Panc1 (cell line): ENCODE measurements at regions of chr10 and their contacts with region 1.

Region 1: DNA sequence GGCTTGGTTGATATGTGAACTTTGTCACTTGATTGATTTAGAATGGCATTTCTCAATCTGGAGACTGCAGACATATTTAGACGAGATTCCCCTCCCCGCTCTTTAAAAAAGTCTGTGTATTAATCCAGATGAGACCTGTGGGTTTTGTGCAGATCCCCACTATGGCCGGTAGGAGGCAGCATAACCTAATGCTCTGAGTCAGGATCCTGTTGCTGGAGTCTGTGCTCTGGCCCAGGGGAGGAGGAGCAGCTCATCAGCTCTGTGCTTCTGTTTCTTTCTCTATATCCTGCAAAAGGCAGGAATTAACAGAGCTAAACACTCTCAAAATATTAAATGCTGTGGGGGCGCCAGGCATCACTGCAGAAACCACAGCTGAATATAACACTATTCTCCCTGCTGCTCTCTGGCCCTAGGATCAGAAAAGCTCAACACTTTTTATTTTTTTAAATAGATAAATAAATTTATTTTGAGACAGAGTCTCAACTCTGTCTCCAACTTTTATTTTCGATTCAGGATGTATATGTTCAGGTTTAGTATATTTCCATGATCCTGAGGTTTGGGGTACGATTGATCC is 23.9 kb upstream of the SEPHS1 start:
- DNase-seq: peak; percentile 55
- ATAC-seq: peak; percentile 97
- H3K4me3 ChIP-seq: no peak overlapping the region
- H3K27ac ChIP-seq: no peak overlapping the region
- H3K4me1 ChIP-seq: no peaks in the 10 kb centered on the region
- H3K27me3 ChIP-seq: no peaks in the 10 kb centered on the region
- CTCF ChIP-seq: peak; percentile 90

Region 2: DNA sequence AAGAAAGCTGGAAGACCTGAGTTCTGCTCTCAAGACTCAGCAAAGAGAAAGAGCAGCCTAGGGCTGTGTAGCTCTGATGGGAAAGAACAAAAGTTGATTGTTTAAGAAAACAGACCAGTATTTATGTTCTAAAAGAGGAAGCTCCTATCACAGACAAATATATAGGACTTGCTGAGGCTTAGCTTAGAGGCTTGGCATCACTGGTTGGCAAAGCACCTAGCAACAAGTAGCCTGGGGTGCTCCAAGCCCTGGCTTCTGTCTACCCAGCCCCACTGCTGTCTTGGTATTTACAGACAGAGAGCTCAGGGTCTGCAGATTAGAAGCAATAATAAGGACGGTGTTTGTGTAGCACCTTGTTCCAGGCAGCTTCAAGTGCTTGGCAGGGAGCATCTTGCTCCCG is 333.6 kb before region 1 on chr10:
- CTCF ChIA-PET with region 1: no interaction called
- POLR2A ChIA-PET with region 1: no interaction called
- in situ Hi-C with region 1: no loop called
- intact Hi-C with region 1: no loop called
- DNase-seq: no peak
- ATAC-seq: peak; percentile 56; the same call in 1 of the 2 replicates
- H3K4me3 ChIP-seq: no peak overlapping the region
- H3K27ac ChIP-seq: no peak overlapping the region
- H3K4me1 ChIP-seq: no peaks in the 10 kb centered on the region
- H3K27me3 ChIP-seq: no peaks in the 10 kb centered on the region
- CTCF ChIP-seq: no peak

Region 3: DNA sequence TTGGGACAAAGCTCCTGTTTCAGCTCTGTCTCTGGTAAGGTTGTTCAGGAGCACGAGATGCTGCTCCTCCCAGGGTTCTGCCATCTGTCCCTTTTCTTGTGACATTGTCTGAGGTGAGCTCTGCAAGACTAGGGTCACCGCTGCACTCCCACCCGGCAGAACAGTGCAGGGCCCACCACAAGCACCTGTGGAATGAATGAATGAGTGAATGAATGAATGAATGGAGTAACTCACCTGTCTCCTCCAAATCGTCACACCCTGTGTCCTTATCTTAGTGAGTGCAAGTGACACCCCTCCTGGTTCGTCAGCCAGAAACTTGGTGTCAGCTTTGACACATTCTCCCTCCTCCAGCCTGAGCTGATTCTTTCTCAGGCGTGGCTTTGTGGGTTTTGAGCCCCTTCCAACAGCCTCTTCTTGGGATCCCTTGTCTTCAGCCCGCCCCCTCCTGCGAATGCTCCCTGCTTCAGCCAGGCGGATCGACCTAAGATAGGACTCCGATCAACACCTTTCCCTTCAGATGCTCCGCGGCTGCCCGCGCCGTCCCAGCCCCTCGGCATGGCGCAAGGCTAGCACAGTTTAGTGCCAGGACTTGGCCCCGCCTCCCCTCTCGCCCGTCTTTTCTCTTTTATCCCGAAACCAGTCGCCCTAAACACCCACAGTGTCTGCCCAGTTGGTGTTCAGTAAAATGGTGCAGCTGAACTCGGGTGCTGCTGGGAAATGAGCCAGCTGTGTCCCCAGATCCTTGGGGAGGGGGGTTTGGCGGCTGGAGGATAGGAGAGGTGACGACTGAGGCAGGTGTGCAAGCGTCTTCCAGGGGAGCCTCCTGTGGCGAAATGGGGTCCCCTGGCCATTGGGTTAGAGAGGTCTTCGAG is 67.6 kb after region 1 on chr10:
- CTCF ChIA-PET with region 1: interaction called, 8 read pairs
- POLR2A ChIA-PET with region 1: no interaction called
- in situ Hi-C with region 1: no loop called
- intact Hi-C with region 1: loop called (anchors 2 kb)
- DNase-seq: no peak
- ATAC-seq: peak; percentile 53; the same call in 1 of the 2 replicates
- H3K4me3 ChIP-seq: peak overlapping the region in 1 of 2 experiments; percentile 16; a peak in 1 of 4 replicates
- H3K27ac ChIP-seq: no peak overlapping the region
- H3K4me1 ChIP-seq: no peaks in the 10 kb centered on the region
- H3K27me3 ChIP-seq: no peaks in the 10 kb centered on the region
- CTCF ChIP-seq: no peak

Region 4: DNA sequence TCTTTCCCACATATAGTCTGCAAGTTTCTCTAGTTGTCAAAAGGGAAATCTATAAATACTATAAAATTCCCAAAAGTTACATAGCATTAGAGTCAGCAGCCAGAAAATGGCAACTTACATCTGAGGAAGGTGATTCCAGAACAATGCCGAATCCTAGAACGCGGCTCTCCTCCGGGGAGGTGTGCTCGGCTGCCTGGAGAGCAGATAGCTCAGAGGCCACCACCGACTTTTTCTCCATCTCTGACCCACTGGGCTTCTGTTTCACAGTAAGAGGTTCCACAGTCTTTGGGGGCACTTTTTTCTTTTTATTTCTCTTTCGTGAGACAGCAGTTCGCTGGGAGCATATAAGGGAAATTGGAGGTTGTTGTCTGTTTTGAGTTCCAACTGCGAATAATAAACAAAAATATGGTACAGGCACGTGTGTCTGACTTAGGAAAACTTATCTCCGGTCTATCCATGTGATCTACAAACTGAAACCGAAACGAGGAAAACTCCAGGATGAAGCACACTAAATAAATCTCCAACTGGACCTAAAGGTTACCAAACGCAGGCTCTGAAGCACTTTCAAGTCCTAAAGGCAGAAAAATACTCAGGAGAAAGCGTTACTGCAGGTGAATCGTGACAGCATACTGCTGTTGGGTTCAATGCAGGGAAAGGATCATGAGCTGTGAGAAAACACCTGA is 120.7 kb after region 1 on chr10:
- CTCF ChIA-PET with region 1: no interaction called
- POLR2A ChIA-PET with region 1: interaction called, 10 read pairs
- in situ Hi-C with region 1: no loop called
- intact Hi-C with region 1: no loop called
- DNase-seq: no peak
- ATAC-seq: no peak; the same call in 1 of the 2 replicates
- H3K4me3 ChIP-seq: peak overlapping the region; percentile 13 to 44; a peak in 3 of 4 replicates
- H3K27ac ChIP-seq: no peak overlapping the region
- H3K4me1 ChIP-seq: no peaks in the 10 kb centered on the region
- H3K27me3 ChIP-seq: no peaks in the 10 kb centered on the region
- CTCF ChIP-seq: no peak

Region 5: DNA sequence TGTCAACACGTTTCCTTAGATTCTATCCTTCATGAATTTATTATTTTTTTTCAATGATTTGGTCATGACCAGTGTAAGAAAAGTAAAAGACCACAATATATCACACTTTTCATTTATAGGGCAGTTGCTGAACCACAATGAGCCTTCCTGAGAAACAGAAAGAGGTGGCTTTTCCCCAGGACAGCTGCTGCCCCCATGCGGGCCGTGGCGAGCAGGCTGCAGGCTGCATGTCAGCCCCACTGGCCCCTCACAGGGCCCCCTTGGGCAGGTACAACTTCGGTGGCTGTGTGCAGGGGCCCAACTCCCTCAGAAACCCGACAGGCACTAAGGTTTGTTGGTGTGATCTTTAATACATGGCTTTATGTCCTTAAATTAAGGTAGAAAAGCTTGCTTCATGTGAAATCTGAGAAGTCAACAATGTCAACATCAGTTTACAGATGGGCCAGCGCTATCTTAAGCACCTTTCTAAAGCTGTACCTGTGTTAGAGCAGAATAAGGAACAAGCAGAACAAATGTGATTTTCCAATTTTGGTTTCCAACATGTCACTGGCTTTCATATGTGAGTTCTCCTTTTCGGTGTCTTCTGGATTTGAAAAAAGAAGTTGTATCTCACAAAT is 146.2 kb after region 1 on chr10:
- CTCF ChIA-PET with region 1: no interaction called
- POLR2A ChIA-PET with region 1: no interaction called
- in situ Hi-C with region 1: no loop called
- intact Hi-C with region 1: loop called (anchors 5 kb)
- DNase-seq: peak; percentile 2
- ATAC-seq: no peak
- H3K4me3 ChIP-seq: no peak overlapping the region
- H3K27ac ChIP-seq: no peak overlapping the region
- H3K4me1 ChIP-seq: no peaks in the 10 kb centered on the region
- H3K27me3 ChIP-seq: no peaks in the 10 kb centered on the region
- CTCF ChIP-seq: peak; percentile 62

Region 6: GRCh38 chr10:13536674-13537366 is 164.8 kb after region 1 on chr10:
- CTCF ChIA-PET with region 1: interaction called, 7 read pairs
- POLR2A ChIA-PET with region 1: interaction called, 3 read pairs
- in situ Hi-C with region 1: no loop called
- intact Hi-C with region 1: loop called (anchors 2 kb)
- DNase-seq: peak; percentile 10
- ATAC-seq: peak; percentile 97
- H3K4me3 ChIP-seq: no peak overlapping the region
- H3K27ac ChIP-seq: no peak overlapping the region
- H3K4me1 ChIP-seq: no peaks in the 10 kb centered on the region
- H3K27me3 ChIP-seq: peaks cover 3% of the 10 kb centered on the region; the same call in 1 of the 2 replicates
- CTCF ChIP-seq: peak; percentile 84

Region 7: GRCh38 chr10:13571541-13571940 is 199.6 kb after region 1 on chr10:
- CTCF ChIA-PET with region 1: no interaction called
- POLR2A ChIA-PET with region 1: no interaction called
- in situ Hi-C with region 1: no loop called
- intact Hi-C with region 1: no loop called
- DNase-seq: no peak
- ATAC-seq: no peak
- H3K4me3 ChIP-seq: no peak overlapping the region
- H3K27ac ChIP-seq: no peak overlapping the region
- H3K4me1 ChIP-seq: no peaks in the 10 kb centered on the region
- H3K27me3 ChIP-seq: 0 out of 2 replicates have a peak, but pooled peaks cover 2% of the 10 kb centered on the region
- CTCF ChIP-seq: no peak

Region 8: GRCh38 chr10:13586676-13587355 is 214.8 kb after region 1 on chr10 and contains the start of gene PRPF18:
- CTCF ChIA-PET with region 1: interaction called, 3 read pairs
- POLR2A ChIA-PET with region 1: no interaction called
- in situ Hi-C with region 1: no loop called
- intact Hi-C with region 1: loop called (anchors 5 kb)
- DNase-seq: peak; percentile 61
- ATAC-seq: peak; percentile 99
- H3K4me3 ChIP-seq: peak within 1 kb of the TSS; percentile 89 to 96
- H3K27ac ChIP-seq: peak within 1 kb of the TSS; percentile 74
- H3K4me1 ChIP-seq: no peaks in the 10 kb centered on the region; the same call in 1 of the 2 replicates
- H3K27me3 ChIP-seq: no peaks in the 10 kb centered on the region
- CTCF ChIP-seq: peak; percentile 96
- total RNA-seq, gene PRPF18: 12.0 TPM

Region 9: DNA sequence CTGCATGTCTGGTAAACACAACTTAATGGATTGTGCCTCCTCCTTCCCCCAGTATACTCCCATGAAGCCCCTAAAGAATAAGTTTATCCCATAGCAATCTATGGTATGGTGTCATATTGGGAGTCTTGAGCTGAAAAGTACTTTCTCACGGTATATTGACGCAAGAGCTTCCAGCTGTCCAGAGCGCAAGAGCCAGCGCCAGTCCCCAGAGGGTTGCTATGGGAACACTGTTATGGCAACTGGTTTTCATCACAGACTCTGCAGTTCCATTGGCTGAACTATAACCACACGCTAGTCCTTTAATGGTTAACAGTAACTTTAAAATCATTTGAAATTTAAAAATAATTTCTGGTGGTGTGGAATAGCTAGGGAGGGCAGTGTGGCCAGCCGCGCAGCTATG is 261.7 kb after region 1 on chr10:
- CTCF ChIA-PET with region 1: no interaction called
- POLR2A ChIA-PET with region 1: no interaction called
- in situ Hi-C with region 1: no loop called
- intact Hi-C with region 1: no loop called
- DNase-seq: no peak
- ATAC-seq: no peak
- H3K4me3 ChIP-seq: no peak overlapping the region
- H3K27ac ChIP-seq: no peak overlapping the region
- H3K4me1 ChIP-seq: no peaks in the 10 kb centered on the region
- H3K27me3 ChIP-seq: no peaks in the 10 kb centered on the region
- CTCF ChIP-seq: no peak